Right cardiac atrium (tissue), 5 donors: ENCODE measurements at regions of chr22 and their contacts with region 1.

Region 1: GRCh38 chr22:32796865-32797573 is 4.5 kb upstream of the TIMP3 start:
- DNase-seq: peak; percentile 81 to 90 (median 89)
- ATAC-seq: peak; percentile 57 to 71
- H3K4me3 ChIP-seq: no peak overlapping the region
- H3K27ac ChIP-seq: peak overlapping the region; percentile 36
- H3K4me1 ChIP-seq: peaks cover 5% of the 10 kb centered on the region
- H3K27me3 ChIP-seq: no peaks in the 10 kb centered on the region

Region 2: GRCh38 chr22:32622004-32622743 is 174.8 kb before region 1 on chr22:
- intact Hi-C with region 1: loop called in 1 of 4 experiments (anchors 5 kb)
- DNase-seq: peak; percentile 66 to 83 (median 83)
- ATAC-seq: peak; percentile 64 to 77
- H3K4me3 ChIP-seq: no peak overlapping the region
- H3K27ac ChIP-seq: peak overlapping the region; percentile 97
- H3K4me1 ChIP-seq: peaks cover 55% of the 10 kb centered on the region
- H3K27me3 ChIP-seq: no peaks in the 10 kb centered on the region

Region 3: DNA sequence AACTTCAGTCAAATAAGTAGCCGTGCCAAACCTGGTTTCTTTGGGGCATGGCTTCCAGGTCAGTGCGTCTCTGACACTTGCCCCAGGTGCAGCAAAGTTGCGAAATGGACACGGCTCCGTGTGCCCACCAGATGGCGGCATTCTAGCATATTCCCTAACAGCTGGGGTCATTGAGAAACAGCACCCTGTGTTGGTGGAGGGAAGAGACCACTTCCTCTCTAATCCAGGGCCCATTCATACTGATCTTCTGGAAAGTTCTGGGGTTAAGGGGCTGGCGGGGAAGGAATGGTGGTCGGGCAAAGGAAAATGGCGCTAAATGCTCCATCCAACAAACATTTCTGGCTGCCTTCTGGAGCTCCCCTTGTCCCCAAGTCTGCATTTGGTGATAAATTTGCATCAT is 136.7 kb before region 1 on chr22:
- intact Hi-C with region 1: loop called (anchors 2 to 5 kb)
- DNase-seq: peak; percentile 66 to 90 (median 84)
- ATAC-seq: peak; percentile 71 to 73
- H3K4me3 ChIP-seq: no peak overlapping the region
- H3K27ac ChIP-seq: no peak overlapping the region
- H3K4me1 ChIP-seq: peaks cover 6% of the 10 kb centered on the region
- H3K27me3 ChIP-seq: no peaks in the 10 kb centered on the region

Region 4: DNA sequence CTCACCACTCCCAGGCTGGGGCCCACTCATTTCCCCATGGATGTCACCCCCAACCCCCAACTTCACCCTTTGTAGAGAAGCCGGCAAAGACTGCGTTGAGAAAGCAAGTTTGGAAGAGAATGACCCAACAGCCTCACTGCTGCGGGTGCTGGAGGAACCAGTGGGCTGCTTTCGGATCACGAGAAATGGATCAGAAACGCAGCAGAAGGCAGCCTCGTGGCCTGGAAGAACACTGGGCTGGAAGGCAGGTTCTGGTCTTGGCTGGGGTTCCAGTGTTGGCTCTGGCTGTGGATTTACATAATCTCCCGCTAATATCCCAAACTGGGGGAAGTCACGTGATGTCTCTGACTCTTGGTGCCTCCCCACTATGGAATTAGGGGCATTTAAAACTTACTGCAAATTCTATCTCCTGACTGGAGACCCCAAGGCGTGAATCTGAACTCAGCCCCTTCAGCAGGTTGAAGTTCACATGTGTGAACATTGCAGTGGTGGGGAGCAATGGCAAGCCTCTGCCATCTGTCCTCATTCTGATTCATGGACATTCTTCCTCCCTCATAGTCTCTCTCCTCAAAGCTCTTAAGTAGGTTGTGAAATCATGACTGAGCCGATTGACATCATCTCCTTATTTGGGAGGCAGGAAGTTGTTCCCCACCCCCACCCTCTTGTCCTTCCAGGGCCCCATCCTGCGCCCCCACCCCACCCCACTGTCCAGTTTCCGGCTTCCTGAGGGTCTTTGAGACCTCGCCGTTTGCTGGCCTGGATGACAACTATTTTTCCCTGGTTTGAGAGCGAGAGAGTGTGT is 32.5 kb before region 1 on chr22:
- intact Hi-C with region 1: no loop called
- DNase-seq: peak; percentile 76 to 90 (median 85)
- ATAC-seq: peak; percentile 73 to 78
- H3K4me3 ChIP-seq: no peak overlapping the region
- H3K27ac ChIP-seq: peak overlapping the region; percentile 83
- H3K4me1 ChIP-seq: peaks cover 25% of the 10 kb centered on the region
- H3K27me3 ChIP-seq: no peaks in the 10 kb centered on the region

Region 5: GRCh38 chr22:32979606-32980005 is 182.6 kb after region 1 on chr22:
- intact Hi-C with region 1: loop called in 1 of 4 experiments (anchors 5 kb)
- DNase-seq: no peak
- ATAC-seq: peak in 1 of 2 donors; percentile 56
- H3K4me3 ChIP-seq: no peak overlapping the region
- H3K27ac ChIP-seq: no peak overlapping the region
- H3K4me1 ChIP-seq: no peaks in the 10 kb centered on the region
- H3K27me3 ChIP-seq: no peaks in the 10 kb centered on the region

Region 6: GRCh38 chr22:32991353-32992121 is 194.5 kb after region 1 on chr22:
- intact Hi-C with region 1: loop called in 3 of 4 experiments (anchors 5 to 10 kb)
- DNase-seq: peak; percentile 66 to 85 (median 79)
- ATAC-seq: peak; percentile 33 to 45
- H3K4me3 ChIP-seq: no peak overlapping the region
- H3K27ac ChIP-seq: no peak overlapping the region
- H3K4me1 ChIP-seq: peaks cover 3% of the 10 kb centered on the region
- H3K27me3 ChIP-seq: no peaks in the 10 kb centered on the region